Aorta (tissue), 5 donors: ENCODE measurements at regions of chr1 and their contacts with region 1.

Region 1: GRCh38 chr1:8097077-8097799 is 71.1 kb upstream of the ERRFI1 start:
- DNase-seq: no peak
- ATAC-seq: peak; percentile 63
- H3K4me3 ChIP-seq: no peak overlapping the region
- H3K27ac ChIP-seq: peak overlapping the region; percentile 83 to 94
- H3K4me1 ChIP-seq: peaks cover 0 to 3% of the 10 kb centered on the region in 2 donors
- H3K27me3 ChIP-seq: no peaks in the 10 kb centered on the region

Region 2: DNA sequence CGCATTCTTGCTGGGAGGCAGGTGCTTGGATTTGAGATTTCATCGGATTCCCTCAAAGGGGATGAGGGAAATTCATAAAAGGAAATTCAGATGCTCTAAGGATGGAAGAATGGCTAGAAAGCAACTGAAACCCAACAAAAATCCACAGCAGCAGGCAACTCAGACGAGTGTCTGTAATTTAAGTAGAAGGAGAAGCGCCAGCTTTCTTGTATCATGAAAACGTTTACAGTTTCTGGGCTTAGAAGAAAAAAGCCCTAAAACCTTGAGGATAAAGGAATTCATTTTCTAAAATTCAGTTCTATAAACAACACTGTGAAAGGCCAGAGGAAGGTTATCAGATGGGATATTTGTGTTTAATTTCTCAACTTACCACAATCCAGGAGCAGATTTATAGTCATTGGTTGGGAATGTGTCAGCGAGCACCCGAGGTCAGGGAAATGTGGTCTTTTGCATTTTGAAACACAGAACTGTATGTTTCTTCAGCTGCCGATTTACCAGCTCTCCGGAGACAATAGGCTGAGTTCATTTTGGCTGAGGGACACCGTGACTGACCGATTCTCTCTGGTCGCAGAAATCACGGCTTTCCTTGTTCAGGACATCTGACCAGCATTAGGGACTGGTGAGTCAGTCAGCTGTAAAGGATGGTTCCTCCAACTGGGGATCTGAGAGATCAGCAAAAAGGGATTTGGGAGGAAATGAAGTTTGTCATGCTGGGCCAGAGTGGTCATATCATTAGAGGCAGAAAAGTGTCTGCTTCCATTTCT is 40.4 kb after region 1 on chr1:
- intact Hi-C with region 1: loop called (anchors 5 kb)
- DNase-seq: peak in 1 of 2 donors; percentile 75
- ATAC-seq: peak; percentile 71
- H3K4me3 ChIP-seq: no peak overlapping the region
- H3K27ac ChIP-seq: peak overlapping the region; percentile 57 to 85
- H3K4me1 ChIP-seq: peaks cover 3 to 9% of the 10 kb centered on the region in 2 donors
- H3K27me3 ChIP-seq: no peaks in the 10 kb centered on the region